Activated CD4-positive, alpha-beta memory T cell treated with anti-CD3 and anti-CD28 coated beads, Interleukin-2, amount 10 ng/mL, durations not matched to agents 7 days and 5 days (primary cell): ENCODE measurements at regions of chr4 and their contacts with region 1.

Region 1: GRCh38 chr4:3041192-3042142 is 32.9 kb downstream of the HTT-AS start:
- DNase-seq: peak; percentile 65
- H3K4me3 Mint-ChIP-seq: peak overlapping the region; percentile 80
- H3K27ac Mint-ChIP-seq: peak overlapping the region; percentile 91
- H3K4me1 Mint-ChIP-seq: peaks cover 78% of the 10 kb centered on the region
- H3K27me3 Mint-ChIP-seq: peaks cover 10% of the 10 kb centered on the region

Region 2: GRCh38 chr4:2963175-2963965 is 78.1 kb before region 1 on chr4 and contains the starts of genes GRK4 and NOP14:
- CTCF ChIA-PET with region 1: interaction called, 11 read pairs
- POLR2A ChIA-PET with region 1: interaction called, 7 read pairs
- DNase-seq: peak; percentile 98
- H3K4me3 Mint-ChIP-seq: peak within 1 kb of the TSS; percentile 73
- H3K27ac Mint-ChIP-seq: peak within 1 kb of the TSS; percentile 67
- H3K4me1 Mint-ChIP-seq: peaks cover 39% of the 10 kb centered on the region
- H3K27me3 Mint-ChIP-seq: peaks cover 4% of the 10 kb centered on the region
- total RNA-seq, gene GRK4: 3.1 to 3.6 TPM
- total RNA-seq, gene NOP14: 34.1 to 38.7 TPM

Region 3: DNA sequence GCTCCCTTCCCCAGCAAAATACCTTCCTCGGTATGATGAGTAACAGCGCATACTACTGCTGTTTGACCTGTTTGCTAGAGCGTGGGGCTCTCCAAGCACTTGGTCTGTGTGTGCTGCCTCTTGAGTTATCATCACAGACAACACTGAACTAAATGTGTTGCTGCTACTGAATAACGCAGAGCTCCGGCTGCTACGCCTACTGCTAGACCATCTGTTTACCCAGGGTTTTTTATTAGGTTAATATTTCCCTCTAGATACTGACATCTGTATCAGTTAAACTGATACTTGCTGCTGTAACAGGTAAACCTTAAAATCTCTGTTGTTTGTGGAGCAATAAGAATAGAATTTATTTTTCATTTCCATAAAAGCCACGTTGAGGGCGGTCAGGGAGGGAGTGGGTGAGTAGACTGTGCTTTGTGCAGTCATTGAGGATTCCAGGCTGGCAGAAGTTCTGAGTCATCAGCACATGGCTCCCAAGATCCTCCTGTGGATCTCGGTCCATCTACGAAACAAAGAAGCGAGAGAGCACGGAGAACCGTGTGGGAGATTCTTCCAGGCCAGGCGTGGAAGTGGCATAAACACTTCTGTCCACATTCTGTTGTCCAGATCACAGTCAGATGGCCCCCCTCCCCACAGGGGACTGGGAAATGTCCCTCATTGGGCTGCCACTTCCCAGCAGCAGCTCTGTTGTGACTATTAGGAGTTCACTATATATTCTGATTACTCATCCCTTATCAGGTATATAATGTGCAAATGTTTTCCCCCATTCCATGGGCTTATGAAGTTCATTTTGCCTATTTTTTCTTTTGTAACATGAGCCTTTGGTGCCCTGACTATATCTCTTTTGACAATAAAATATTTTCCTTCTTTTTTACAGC is 64.0 kb before region 1 on chr4:
- CTCF ChIA-PET with region 1: interaction called, 30 read pairs
- POLR2A ChIA-PET with region 1: interaction called, 7 read pairs
- DNase-seq: no peak
- H3K4me3 Mint-ChIP-seq: no peak overlapping the region
- H3K27ac Mint-ChIP-seq: no peak overlapping the region
- H3K4me1 Mint-ChIP-seq: no peaks in the 10 kb centered on the region
- H3K27me3 Mint-ChIP-seq: peaks cover 5% of the 10 kb centered on the region

Region 4: GRCh38 chr4:3074078-3074795 is 32.8 kb after region 1 on chr4 and contains the starts of genes HTT and HTT-AS:
- CTCF ChIA-PET with region 1: interaction called, 4 read pairs
- POLR2A ChIA-PET with region 1: interaction called, 11 read pairs
- DNase-seq: peak; percentile 97
- H3K4me3 Mint-ChIP-seq: peak within 1 kb of the TSS; percentile 84
- H3K27ac Mint-ChIP-seq: peak within 1 kb of the TSS; percentile 79
- H3K4me1 Mint-ChIP-seq: peaks cover 23% of the 10 kb centered on the region
- H3K27me3 Mint-ChIP-seq: no peaks in the 10 kb centered on the region
- total RNA-seq, gene HTT: 50.7 to 54.9 TPM
- total RNA-seq, gene HTT-AS: not detected